ENCODE measurements at regions of chr3 and their contacts with region 1.

Region 1: GRCh38 chr3:4493014-4493940 is at the start of gene ITPR1:
- DNase-seq: peak; percentile 91 to 99 (median 98)
- ATAC-seq: peak; percentile 95
- H3K4me3 ChIP-seq: peak within 1 kb of the TSS; percentile 84
- H3K4me3 Mint-ChIP-seq: peak within 1 kb of the TSS; percentile 93 to 98 (median 96)
- H3K27ac ChIP-seq: peak within 1 kb of the TSS; percentile 89
- H3K27ac Mint-ChIP-seq: peak within 1 kb of the TSS; percentile 86 to 96 (median 90)
- H3K4me1 ChIP-seq: peaks cover 14 to 17% of the 10 kb centered on the region in 2 donors
- H3K4me1 Mint-ChIP-seq: peaks cover 36 to 57% (median 41%) of the 10 kb centered on the region in 7 donors
- H3K27me3 ChIP-seq: no peaks in the 10 kb centered on the region
- H3K27me3 Mint-ChIP-seq: peaks cover 0 to 40% (median 0%) of the 10 kb centered on the region in 5 donors
- total RNA-seq, gene ITPR1: 66.7 to 118 (median 90.7) TPM

Region 2: DNA sequence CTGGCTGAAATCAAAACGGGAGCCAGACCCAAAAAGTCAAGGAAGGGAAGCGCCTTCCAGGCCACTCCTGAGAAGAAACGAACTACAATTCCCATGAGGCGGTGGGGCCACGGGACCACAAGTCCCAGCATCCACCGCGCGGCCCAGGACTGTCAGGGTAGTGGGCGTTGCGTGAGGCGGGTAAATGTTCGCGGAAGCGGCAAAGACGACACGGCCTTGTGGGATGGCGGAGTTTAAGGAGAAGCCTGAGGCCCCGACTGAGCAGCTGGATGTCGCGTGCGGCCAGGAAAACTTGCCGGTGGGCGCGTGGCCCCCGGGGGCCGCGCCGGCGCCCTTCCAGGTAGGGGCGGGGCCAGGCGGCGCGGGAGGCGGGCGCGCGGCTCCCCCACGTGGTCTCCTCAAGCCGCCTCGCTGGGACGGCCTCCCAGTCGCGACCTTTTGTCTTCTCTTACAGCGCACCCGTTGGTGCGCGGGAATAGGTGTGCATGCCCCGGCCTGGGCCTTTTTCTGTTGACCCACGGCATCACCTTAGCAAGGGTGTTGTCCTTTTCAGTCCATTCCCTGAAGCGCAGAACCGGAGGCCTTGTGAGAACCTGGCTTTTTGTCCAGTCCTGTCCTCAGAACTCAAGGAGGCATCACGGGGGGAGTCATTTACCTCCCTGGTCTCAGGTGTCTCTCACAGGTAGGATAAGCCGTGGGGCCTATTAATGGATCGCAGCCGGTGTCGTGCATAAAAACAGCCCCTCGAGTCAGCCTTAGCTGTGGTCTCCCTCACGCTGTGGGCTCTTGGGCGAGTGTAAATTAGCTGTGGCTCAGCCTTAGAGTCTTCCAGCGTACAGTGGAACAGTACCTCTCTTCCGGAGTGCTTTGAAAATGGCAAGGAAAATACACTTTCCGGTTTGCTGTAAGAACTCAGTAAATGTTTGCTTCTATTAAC is 189.8 kb before region 1 on chr3 and contains the start of gene SETMAR:
- CTCF ChIA-PET with region 1: no interaction called
- POLR2A ChIA-PET with region 1: interaction called, 7 read pairs
- intact Hi-C with region 1: loop called (anchors 1 kb)
- DNase-seq: peak; percentile 73 to 86 (median 82)
- ATAC-seq: peak; percentile 97
- H3K4me3 ChIP-seq: peak within 1 kb of the TSS; percentile 92
- H3K4me3 Mint-ChIP-seq: peak within 1 kb of the TSS; percentile 88 to 99 (median 97)
- H3K27ac ChIP-seq: peak within 1 kb of the TSS; percentile 91
- H3K27ac Mint-ChIP-seq: peak within 1 kb of the TSS; percentile 92 to 99 (median 98)
- H3K4me1 ChIP-seq: peaks cover 0 to 8% of the 10 kb centered on the region in 2 donors
- H3K4me1 Mint-ChIP-seq: peaks cover 8 to 45% (median 34%) of the 10 kb centered on the region in 7 donors
- H3K27me3 ChIP-seq: no peaks in the 10 kb centered on the region
- H3K27me3 Mint-ChIP-seq: no peaks in the 10 kb centered on the region
- total RNA-seq, gene SETMAR: 6.4 to 13.7 (median 12.5) TPM

Region 3: DNA sequence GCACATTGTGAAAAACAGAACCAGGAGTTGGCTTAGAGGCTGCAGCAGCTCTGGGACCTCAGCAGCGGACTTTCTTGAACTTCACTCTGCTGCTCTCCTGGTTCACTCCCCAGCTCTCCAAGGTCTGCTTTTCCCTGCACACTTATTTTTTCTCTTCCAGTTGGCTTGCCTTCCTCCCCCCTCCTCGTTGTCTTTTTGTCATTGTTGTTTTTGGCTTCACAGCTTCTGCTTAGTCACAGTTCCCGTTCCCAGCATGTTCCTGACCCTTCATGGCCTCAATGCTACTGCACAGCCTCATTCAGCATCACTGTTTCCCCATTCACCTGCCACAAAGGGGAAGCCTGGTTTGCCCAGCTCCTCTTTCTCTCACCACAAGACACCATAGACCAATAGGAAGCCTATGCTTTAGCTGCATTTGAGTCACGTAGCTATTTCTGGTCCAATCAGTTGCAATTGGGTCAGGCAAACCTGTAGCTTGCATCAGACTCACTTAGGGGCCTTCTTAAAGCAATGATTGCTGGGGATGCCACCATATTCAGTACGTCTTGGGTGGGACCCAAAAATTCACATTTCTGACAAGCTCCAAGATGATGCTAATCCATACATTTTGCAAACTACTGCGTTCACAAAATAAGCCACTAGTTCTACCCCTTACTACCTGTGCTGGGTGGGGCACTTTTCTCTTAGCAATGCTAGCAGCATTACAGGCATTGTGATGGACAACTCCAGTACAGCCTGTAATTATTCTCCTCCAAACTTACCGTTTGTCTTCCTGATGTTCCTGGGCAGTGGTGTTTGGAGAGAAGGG is 18.4 kb before region 1 on chr3:
- CTCF ChIA-PET with region 1: interaction called, 5 read pairs
- POLR2A ChIA-PET with region 1: interaction called, 55 read pairs
- intact Hi-C with region 1: loop called in 1 of 2 experiments (anchors 2 kb)
- DNase-seq: no peak
- ATAC-seq: peak; percentile 94
- H3K4me3 ChIP-seq: no peak overlapping the region
- H3K4me3 Mint-ChIP-seq: peak overlapping the region in 1 of 10 donors; percentile 47
- H3K27ac ChIP-seq: no peak overlapping the region
- H3K27ac Mint-ChIP-seq: peak overlapping the region in 1 of 9 donors; percentile 29
- H3K4me1 ChIP-seq: no peaks in the 10 kb centered on the region
- H3K4me1 Mint-ChIP-seq: peaks cover 0 to 7% (median 0%) of the 10 kb centered on the region in 7 donors
- H3K27me3 ChIP-seq: no peaks in the 10 kb centered on the region
- H3K27me3 Mint-ChIP-seq: peaks cover 10 to 30% (median 25%) of the 10 kb centered on the region in 5 donors

Region 4: DNA sequence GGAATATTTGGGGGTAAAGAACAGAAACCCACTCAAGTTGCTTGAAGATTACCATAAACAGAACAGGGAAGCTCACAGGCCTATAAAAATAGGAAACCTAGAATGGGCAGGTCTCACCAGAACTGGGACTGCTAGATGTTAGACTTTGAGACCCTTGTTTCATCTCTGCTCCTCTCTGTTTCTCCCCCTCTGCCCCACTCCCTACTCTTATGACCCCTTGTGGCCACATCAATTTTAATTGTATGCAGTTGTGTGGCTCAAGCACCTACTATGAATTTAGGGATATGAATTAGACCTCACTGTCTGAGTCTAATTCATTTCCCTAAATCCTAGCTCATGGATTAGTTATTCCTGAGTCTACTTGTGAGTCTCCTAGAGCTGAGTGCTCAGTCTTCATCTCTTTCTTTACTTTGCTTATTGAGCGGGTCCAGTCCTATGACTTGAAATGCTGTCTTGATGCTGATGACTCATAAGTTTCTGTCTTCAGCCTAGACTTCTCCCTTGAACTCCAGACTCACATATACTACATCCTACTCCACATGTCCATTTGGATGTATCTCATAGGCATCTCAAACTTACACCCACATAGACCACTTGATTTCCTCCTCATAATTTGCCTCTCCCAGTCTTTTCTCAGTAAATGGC is 78.5 kb after region 1 on chr3:
- CTCF ChIA-PET with region 1: interaction called, 3 read pairs
- POLR2A ChIA-PET with region 1: no interaction called
- intact Hi-C with region 1: loop called in 1 of 2 experiments (anchors 1 kb)
- DNase-seq: peak in 2 of 9 donors; percentile 12 to 18
- ATAC-seq: peak; percentile 49
- H3K4me3 ChIP-seq: no peak overlapping the region
- H3K4me3 Mint-ChIP-seq: no peak overlapping the region
- H3K27ac ChIP-seq: no peak overlapping the region
- H3K27ac Mint-ChIP-seq: peak overlapping the region in 2 of 9 donors; percentile 28 to 40
- H3K4me1 ChIP-seq: no peaks in the 10 kb centered on the region
- H3K4me1 Mint-ChIP-seq: peaks cover 6 to 59% (median 43%) of the 10 kb centered on the region in 7 donors
- H3K27me3 ChIP-seq: no peaks in the 10 kb centered on the region
- H3K27me3 Mint-ChIP-seq: no peaks in the 10 kb centered on the region

Region 5: GRCh38 chr3:4845882-4846281 is 352.6 kb after region 1 on chr3:
- CTCF ChIA-PET with region 1: no interaction called
- POLR2A ChIA-PET with region 1: no interaction called
- intact Hi-C with region 1: loop called in 1 of 2 experiments (anchors 10 kb)
- DNase-seq: peak in 7 of 9 donors; percentile 43 to 76 (median 60)
- ATAC-seq: peak; percentile 87
- H3K4me3 ChIP-seq: no peak overlapping the region
- H3K4me3 Mint-ChIP-seq: peak overlapping the region in 9 of 10 donors; percentile 2 to 68 (median 46)
- H3K27ac ChIP-seq: peak overlapping the region; percentile 81
- H3K27ac Mint-ChIP-seq: peak overlapping the region; percentile 57 to 93 (median 76)
- H3K4me1 ChIP-seq: peaks cover 38 to 87% of the 10 kb centered on the region in 2 donors
- H3K4me1 Mint-ChIP-seq: peaks cover 39 to 99% (median 93%) of the 10 kb centered on the region in 7 donors
- H3K27me3 ChIP-seq: no peaks in the 10 kb centered on the region
- H3K27me3 Mint-ChIP-seq: no peaks in the 10 kb centered on the region

Region 6: GRCh38 chr3:5057857-5058324 is 564.6 kb after region 1 on chr3:
- CTCF ChIA-PET with region 1: no interaction called
- POLR2A ChIA-PET with region 1: no interaction called
- intact Hi-C with region 1: loop called in 1 of 2 experiments (anchors 10 kb)
- DNase-seq: peak; percentile 22 to 75 (median 64)
- ATAC-seq: peak; percentile 92
- H3K4me3 ChIP-seq: no peak overlapping the region
- H3K4me3 Mint-ChIP-seq: peak overlapping the region in 1 of 10 donors; percentile 25
- H3K27ac ChIP-seq: no peak overlapping the region
- H3K27ac Mint-ChIP-seq: no peak overlapping the region
- H3K4me1 ChIP-seq: no peaks in the 10 kb centered on the region
- H3K4me1 Mint-ChIP-seq: peaks cover 0 to 38% (median 0%) of the 10 kb centered on the region in 7 donors
- H3K27me3 ChIP-seq: no peaks in the 10 kb centered on the region
- H3K27me3 Mint-ChIP-seq: peaks cover 0 to 4% (median 0%) of the 10 kb centered on the region in 5 donors